PC-9 (cell line): ENCODE measurements at regions of chrX and their contacts with region 1.

Region 1: DNA sequence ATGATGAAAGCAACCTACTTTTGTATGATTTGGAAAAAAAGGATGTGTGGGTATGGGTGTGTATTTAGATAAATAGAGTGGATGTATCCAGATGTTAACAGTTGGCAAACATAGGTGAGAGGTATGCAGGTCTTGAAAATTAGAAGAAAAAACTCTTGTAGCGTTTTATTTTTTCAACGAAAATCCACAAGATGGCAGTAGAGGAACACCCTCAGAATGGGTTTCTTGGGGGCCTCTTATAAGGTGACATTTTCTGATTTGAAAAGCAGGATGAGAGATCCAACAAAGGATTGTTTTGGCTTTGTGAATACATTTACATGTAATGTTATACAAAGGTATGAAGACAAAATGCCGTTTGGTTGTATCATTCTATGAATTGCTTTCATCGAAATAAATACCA is 68.3 kb downstream of the FMR1NB start:
- DNase-seq: peak in 1 of 2 experiments; percentile 50
- H3K4me3 ChIP-seq: no peak overlapping the region
- H3K27ac ChIP-seq: no peak overlapping the region
- H3K4me1 ChIP-seq: no peaks in the 10 kb centered on the region
- H3K27me3 ChIP-seq: no peaks in the 10 kb centered on the region
- CTCF ChIP-seq: peak; percentile 87

Region 2: DNA sequence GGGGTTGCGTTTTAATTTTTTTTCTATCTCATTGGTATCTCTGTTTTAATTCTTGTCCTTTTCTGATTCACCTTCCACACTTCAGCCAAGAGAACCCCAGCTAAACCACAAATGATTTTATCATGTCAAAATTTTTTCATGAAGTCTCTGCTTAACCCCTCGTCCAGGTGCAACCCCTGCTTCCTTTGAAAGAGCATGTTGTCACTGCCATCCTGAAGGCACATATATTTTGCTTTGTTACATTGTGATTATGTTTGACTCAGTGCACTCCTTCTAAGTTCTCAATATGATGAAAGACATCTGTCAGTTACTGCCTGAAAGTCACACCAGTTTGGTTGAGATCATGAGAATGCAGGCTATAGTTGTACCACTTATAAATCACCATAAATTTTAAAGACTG is 237.6 kb before region 1 on chrX:
- CTCF ChIA-PET with region 1: no interaction called
- POLR2A ChIA-PET with region 1: no interaction called
- intact Hi-C with region 1: loop called (anchors 10 kb)
- DNase-seq: no peak
- H3K4me3 ChIP-seq: no peak overlapping the region
- H3K27ac ChIP-seq: no peak overlapping the region
- H3K4me1 ChIP-seq: no peaks in the 10 kb centered on the region
- H3K27me3 ChIP-seq: no peaks in the 10 kb centered on the region
- CTCF ChIP-seq: no peak

Region 3: DNA sequence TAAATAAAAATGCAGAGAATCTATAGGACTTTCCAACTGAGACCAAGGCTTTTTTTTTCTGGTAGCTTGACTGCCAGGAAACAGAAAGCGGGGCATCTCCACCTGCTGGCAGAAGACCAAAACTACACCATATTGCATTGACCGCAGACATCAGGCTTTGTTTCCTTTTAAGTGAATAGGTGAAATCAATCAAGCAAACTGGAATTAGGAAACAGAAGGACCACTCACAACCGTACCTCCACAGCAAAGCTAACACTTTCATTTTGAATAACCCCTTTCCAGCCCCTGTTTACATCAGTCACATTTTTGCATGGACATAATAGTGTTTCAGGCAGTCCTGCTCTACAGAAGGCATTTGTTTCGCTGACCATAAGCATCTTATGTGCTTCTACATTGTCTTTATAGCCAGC is 1237.5 kb after region 1 on chrX:
- CTCF ChIA-PET with region 1: no interaction called
- POLR2A ChIA-PET with region 1: no interaction called
- intact Hi-C with region 1: loop called (anchors 2 kb)
- DNase-seq: peak in 1 of 2 experiments; percentile 39
- H3K4me3 ChIP-seq: no peak overlapping the region
- H3K27ac ChIP-seq: no peak overlapping the region
- H3K4me1 ChIP-seq: no peaks in the 10 kb centered on the region
- H3K27me3 ChIP-seq: no peaks in the 10 kb centered on the region
- CTCF ChIP-seq: peak; percentile 92

Region 4: DNA sequence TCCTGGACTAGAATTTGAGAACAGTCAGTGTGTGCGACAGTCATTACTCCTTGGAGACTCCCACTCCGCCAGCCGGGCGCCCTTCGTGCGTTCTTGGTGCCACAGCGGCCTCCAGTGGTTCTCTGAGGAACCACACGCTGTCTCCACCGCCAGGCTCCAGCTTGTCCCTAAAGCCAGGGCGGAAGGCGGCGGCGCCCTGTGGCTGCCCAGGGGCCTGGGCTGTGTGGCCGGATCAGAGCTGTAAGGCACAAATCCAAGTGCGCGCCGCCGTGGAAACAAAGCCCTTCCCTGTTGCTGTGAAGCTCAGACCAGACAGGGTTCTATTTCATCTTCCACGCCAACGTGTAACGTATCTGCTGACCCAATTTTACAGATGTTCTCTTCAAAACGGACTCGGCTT is 1421.5 kb after region 1 on chrX:
- CTCF ChIA-PET with region 1: no interaction called
- POLR2A ChIA-PET with region 1: no interaction called
- intact Hi-C with region 1: loop called (anchors 1 kb)
- DNase-seq: peak; percentile 60 to 85
- H3K4me3 ChIP-seq: no peak overlapping the region
- H3K27ac ChIP-seq: no peak overlapping the region
- H3K4me1 ChIP-seq: peaks cover 7% of the 10 kb centered on the region; the same call in 1 of the 2 replicates
- H3K27me3 ChIP-seq: peaks cover 36% of the 10 kb centered on the region
- CTCF ChIP-seq: peak; percentile 98